Activated naive CD4-positive, alpha-beta T cell treated with anti-CD3 and anti-CD28 coated beads for 36 hours (primary cell): ENCODE measurements at regions of chr3 and their contacts with region 1.

Region 1: DNA sequence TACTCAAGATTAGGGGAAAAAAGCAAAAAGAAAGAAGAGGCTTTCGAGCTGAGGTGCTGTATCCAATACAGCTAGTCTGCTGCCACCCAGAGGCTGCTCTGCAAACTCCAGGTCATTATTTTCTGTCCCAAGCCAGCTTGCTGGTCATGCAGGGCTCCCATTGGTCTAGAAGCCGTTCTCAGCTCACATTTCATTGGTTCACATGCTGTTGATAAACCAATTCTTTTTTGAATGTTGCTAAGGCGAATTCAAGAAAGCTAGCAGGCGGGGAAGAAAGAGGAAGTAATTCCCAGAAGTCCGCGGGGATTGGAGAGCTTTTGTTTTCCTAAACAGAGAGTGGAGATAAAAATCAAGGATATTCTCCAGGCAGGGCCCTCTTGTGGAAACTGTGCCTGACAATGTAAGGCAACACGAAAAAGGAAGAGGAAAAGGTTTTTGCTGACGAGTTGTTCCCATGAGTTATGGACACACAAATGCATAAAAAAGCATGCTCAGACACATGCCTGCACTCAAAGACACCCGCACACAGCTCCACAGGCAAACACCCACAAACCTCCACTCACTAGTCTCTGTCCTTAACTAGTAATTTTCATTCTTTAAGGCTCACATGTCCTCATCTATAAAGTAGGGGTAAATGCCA is 33.4 kb downstream of the FSTL1 start:
- DNase-seq: peak; percentile 96
- H3K4me3 Mint-ChIP-seq: peak overlapping the region; percentile 74
- H3K27ac Mint-ChIP-seq: peak overlapping the region; percentile 32
- H3K4me1 Mint-ChIP-seq: peaks cover 8% of the 10 kb centered on the region
- H3K27me3 Mint-ChIP-seq: no peaks in the 10 kb centered on the region

Region 2: DNA sequence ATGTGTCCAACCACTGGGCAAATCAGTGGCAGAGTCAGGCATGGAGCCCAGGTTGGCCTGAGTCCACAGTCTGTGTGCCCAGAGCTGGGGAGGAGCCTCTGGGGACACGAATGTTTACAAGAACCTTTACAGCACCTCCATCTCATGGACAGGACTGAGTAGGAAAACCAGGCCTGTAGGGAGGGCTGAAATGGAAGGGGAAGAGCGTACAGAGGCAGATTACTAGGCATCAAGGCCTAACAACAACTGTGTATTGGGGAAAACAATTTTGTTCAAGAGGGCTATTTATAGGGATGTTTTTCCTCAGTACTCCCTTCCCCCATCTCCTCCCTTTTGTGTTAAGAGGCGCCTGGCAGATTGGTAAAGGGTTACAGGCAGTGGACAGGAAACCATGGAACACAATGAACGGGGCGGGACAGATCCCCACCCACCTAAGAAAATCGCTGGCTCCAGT is 1138.3 kb before region 1 on chr3:
- CTCF ChIA-PET with region 1: no interaction called
- intact Hi-C with region 1: loop called (anchors 10 kb)
- DNase-seq: no peak
- H3K4me3 Mint-ChIP-seq: no peak overlapping the region
- H3K27ac Mint-ChIP-seq: no peak overlapping the region
- H3K4me1 Mint-ChIP-seq: peaks cover 19% of the 10 kb centered on the region
- H3K27me3 Mint-ChIP-seq: no peaks in the 10 kb centered on the region

Region 3: GRCh38 chr3:119819806-119820205 is 597.6 kb before region 1 on chr3:
- CTCF ChIA-PET with region 1: no interaction called
- intact Hi-C with region 1: loop called (anchors 1 kb)
- DNase-seq: no peak
- H3K4me3 Mint-ChIP-seq: no peak overlapping the region
- H3K27ac Mint-ChIP-seq: no peak overlapping the region
- H3K4me1 Mint-ChIP-seq: peaks cover 4% of the 10 kb centered on the region
- H3K27me3 Mint-ChIP-seq: no peaks in the 10 kb centered on the region

Region 4: DNA sequence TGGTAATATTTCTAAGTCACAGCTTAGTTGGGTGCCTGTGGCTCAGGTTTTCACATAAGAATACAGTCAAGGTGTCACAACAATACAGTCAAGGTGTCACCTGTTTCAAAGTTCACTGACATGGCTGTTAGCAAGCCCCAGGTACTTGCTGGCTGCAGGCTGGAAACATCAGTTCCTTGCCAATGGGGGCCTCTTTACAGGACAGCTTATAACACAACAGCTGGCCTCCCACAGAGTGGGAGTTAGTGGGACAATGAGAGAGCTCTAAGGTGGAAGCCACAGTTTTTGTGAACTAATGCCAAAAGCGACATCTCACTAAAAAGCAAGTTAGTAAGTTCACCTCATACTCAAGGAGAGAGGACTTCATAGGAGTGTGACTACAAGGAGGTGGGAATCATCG is 177.7 kb before region 1 on chr3:
- CTCF ChIA-PET with region 1: interaction called, 141 read pairs
- intact Hi-C with region 1: loop called (anchors 1 kb)
- DNase-seq: no peak
- H3K4me3 Mint-ChIP-seq: no peak overlapping the region
- H3K27ac Mint-ChIP-seq: no peak overlapping the region
- H3K4me1 Mint-ChIP-seq: no peaks in the 10 kb centered on the region
- H3K27me3 Mint-ChIP-seq: peaks cover 8% of the 10 kb centered on the region

Region 5: DNA sequence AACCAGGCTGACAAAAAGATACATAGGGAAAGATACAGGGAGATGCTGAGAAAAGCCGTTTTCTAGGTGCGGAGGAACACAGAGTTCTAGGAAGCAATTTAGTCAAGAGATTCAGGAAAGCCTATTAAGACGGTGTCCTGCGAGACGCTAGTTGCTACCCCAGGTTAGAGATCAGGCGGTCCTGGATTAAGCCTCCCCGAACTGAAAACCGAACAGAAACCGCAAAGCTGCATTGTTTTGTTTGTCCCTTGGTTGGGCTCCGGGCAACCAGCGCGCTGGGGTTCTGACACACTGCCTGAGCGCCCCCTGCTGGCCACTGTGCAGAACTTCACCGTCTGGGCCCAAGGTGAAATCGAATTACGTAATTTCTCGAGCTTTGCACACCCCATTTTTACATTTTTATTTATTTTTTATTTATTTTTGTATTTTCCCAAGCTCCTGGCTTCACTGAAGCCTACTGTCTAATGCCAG is 141.4 kb after region 1 on chr3:
- CTCF ChIA-PET with region 1: interaction called, 76 read pairs
- intact Hi-C with region 1: loop called (anchors 1 kb)
- DNase-seq: peak; percentile 91
- H3K4me3 Mint-ChIP-seq: peak overlapping the region; percentile 72
- H3K27ac Mint-ChIP-seq: no peak overlapping the region
- H3K4me1 Mint-ChIP-seq: peaks cover 19% of the 10 kb centered on the region
- H3K27me3 Mint-ChIP-seq: peaks cover 8% of the 10 kb centered on the region

Region 6: DNA sequence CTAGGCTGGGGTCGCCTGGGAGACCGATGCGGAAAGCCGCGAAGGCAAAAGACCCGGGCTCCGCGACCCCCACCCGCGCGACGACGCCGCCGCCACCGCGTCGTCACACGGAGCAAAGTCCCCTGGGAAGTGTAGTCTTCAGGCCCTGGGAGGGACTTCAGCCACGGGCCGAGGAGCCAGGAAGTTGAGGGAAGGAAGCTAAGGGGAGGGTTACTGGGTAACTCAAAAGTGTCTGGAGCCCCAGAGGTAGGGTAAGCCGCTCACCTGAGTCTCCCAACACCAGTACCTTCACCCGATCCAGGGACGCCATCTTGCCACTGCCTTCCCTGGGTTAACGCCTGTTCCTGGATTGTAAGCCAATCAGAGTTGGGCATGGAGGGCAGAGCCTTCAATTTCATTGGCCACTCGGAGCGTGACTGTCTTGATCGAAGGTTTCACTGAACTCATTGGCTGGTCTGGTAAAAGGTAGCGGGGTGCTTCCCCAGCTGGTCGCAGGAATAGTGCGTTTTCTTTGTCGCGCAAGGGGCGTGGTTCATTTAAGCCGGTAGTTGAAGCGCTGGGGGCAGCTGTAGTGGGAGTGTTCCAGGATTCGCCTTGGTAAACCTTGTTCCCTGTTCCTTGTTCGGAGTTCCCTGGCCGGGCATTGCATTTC is 324.9 kb after region 1 on chr3 and contains the starts of genes GTF2E1 and RABL3:
- CTCF ChIA-PET with region 1: no interaction called
- intact Hi-C with region 1: loop called (anchors 1 kb)
- DNase-seq: peak; percentile 98
- H3K4me3 Mint-ChIP-seq: peak within 1 kb of the TSS; percentile 90
- H3K27ac Mint-ChIP-seq: peak within 1 kb of the TSS; percentile 96
- H3K4me1 Mint-ChIP-seq: peaks cover 33% of the 10 kb centered on the region
- H3K27me3 Mint-ChIP-seq: no peaks in the 10 kb centered on the region
- total RNA-seq, gene GTF2E1: 13.2 TPM
- total RNA-seq, gene RABL3: 34.7 to 36.8 TPM